ENCODE measurements at regions of chr1 and their contacts with region 1.

Region 1: GRCh38 chr1:108828022-108828961 is 28.6 kb downstream of the AKNAD1 start:
- DNase-seq: peak; percentile 56
- H3K4me3 ChIP-seq: no peak overlapping the region; a peak in 1 of 4 replicates
- H3K27ac ChIP-seq: peak overlapping the region in 1 of 2 experiments; percentile 93; a peak in 2 of 4 replicates
- H3K4me1 ChIP-seq: peaks cover 9 to 20% of the 10 kb centered on the region in 2 experiments; a peak in 3 of 4 replicates
- H3K27me3 ChIP-seq: no peaks in the 10 kb centered on the region
- CTCF ChIP-seq: peak; percentile 61
- EP300 ChIP-seq: no peak
- RAD21 ChIP-seq: peak; percentile 64

Region 2: GRCh38 chr1:108780937-108781574 is 47.2 kb before region 1 on chr1:
- CTCF ChIA-PET with region 1: no interaction called
- POLR2A ChIA-PET with region 1: no interaction called
- DNase-seq: no peak
- H3K4me3 ChIP-seq: no peak overlapping the region
- H3K27ac ChIP-seq: no peak overlapping the region
- H3K4me1 ChIP-seq: no peaks in the 10 kb centered on the region
- H3K27me3 ChIP-seq: no peaks in the 10 kb centered on the region
- CTCF ChIP-seq: no peak
- EP300 ChIP-seq: no peak
- RAD21 ChIP-seq: no peak

Region 3: DNA sequence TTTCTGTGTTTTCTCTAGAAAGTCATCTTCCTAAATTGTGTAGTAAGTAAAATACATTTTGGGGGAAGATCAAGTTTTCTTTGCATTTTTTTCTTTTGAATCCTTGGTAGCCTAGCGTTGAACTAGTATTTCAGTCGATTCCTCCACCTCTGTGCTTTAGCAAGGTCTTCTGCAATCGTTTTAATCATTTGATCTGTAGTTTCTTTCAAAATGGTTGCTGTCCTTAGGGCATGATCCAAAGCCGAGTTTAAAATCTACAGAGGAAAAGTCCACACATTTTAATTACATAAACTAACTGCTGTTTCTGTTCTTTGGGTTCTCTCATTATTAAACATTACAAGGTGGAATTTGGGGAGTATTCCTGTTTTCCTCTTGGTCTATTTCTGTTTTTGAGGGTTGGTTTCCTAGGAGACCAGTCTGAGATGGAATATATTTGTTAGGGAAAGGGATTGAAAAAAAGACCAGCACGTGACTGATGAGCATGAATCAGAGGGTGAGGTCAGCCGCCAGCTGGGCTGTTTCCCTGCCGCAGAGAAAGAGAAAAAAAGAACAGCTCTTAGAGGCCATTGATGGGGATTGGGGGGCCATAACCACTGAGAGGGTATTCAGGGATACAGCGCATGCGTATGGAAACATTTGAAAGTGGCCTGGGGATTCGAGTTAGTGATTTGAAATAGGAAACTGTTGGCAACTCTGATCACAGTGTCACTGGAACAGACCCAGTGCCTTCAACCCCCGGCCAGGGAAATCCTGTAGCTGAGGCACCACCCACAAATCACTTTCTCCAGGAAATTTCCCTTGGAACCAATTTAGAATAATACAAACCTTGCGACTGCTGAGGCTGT is 12.0 kb before region 1 on chr1:
- CTCF ChIA-PET with region 1: interaction called, 16 read pairs
- POLR2A ChIA-PET with region 1: interaction called, 8 read pairs
- DNase-seq: peak; percentile 76
- H3K4me3 ChIP-seq: peak overlapping the region in 1 of 2 experiments; percentile 6; a peak in 2 of 4 replicates
- H3K27ac ChIP-seq: peak overlapping the region; percentile 96 to 99
- H3K4me1 ChIP-seq: peaks cover 20 to 30% of the 10 kb centered on the region in 2 experiments
- H3K27me3 ChIP-seq: no peaks in the 10 kb centered on the region
- CTCF ChIP-seq: no peak
- EP300 ChIP-seq: no peak
- RAD21 ChIP-seq: no peak

Measured in SK-N-SH (cell line).